ENCODE measurements at regions of chr7 and their contacts with region 1.

Region 1: GRCh38 chr7:18163091-18163490 is 135.4 kb upstream of the PRPS1L1 start:
- DNase-seq: no peak
- ATAC-seq: no peak

Region 2: DNA sequence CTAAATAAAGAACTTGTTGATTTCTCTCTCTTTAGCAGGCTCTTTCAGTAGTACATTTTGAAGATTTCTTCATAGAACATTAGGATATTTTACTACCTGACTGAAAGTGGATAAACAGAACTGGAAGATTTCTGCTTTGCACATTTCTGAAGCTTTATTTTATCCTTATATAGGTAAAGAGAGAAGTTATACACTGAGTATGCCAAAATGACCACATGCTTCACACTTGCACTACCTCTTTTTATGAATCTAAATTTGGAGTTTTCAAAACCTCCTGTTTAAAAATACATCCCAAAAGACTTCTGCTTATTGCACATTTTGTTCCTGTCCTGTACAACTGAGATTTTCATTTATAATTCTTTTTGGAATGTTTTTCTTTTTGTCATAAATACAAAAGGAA is 62.0 kb after region 1 on chr7:
- intact Hi-C with region 1: loop called in 1 of 2 experiments (anchors 5 kb)
- DNase-seq: no peak
- ATAC-seq: no peak